Activated naive CD4-positive, alpha-beta T cell treated with anti-CD3 and anti-CD28 coated beads for 36 hours (primary cell): ENCODE measurements at regions of chr2 and their contacts with region 1.

Region 1: GRCh38 chr2:196101325-196101991 is 32.8 kb upstream of the DNAH7 start:
- DNase-seq: peak; percentile 71
- H3K4me3 Mint-ChIP-seq: no peak overlapping the region
- H3K27ac Mint-ChIP-seq: peak overlapping the region; percentile 44
- H3K4me1 Mint-ChIP-seq: peaks cover 44% of the 10 kb centered on the region
- H3K27me3 Mint-ChIP-seq: no peaks in the 10 kb centered on the region

Region 2: DNA sequence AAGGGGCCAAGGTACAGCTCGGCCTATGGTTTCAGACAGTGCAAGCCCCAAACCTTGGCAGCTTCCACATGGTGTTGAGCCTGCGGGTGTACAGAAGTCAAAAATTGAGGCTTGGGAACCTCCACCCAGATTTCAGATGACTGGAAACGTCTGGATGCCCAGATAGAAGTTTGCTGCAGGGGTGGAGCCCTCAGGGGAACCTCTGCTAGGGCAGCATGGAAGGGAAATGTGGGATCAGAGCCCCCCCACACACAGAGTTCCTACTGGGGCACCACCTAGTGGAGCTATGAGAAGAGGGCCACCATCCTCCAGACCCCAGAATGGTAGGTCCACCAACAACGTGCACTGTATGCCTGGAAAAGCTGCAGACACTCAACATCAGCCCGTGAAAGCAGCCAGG is 17.9 kb before region 1 on chr2:
- CTCF ChIA-PET with region 1: interaction called, 14 read pairs
- intact Hi-C with region 1: loop called (anchors 2 kb)
- DNase-seq: no peak
- H3K4me3 Mint-ChIP-seq: no peak overlapping the region
- H3K27ac Mint-ChIP-seq: no peak overlapping the region
- H3K4me1 Mint-ChIP-seq: peaks cover 27% of the 10 kb centered on the region
- H3K27me3 Mint-ChIP-seq: no peaks in the 10 kb centered on the region

Region 3: DNA sequence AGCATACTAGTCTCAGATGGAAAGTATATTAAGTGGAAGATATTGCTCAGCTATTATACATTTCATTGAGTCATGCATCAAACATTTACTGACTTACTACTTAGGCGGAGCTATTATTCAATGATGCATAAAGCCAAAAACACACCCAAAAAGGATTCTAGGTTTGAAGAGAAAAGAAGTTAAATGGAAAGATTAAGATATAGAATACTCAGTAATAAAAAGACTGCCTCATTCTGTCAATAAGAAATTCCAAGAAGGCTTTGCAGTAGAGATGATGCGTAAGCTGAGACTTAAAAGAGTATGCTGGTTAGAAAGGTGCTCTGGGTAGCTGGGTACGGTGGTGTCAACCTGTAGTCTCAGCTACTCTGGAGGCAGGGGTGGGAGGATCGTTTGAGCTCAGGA is 42.3 kb after region 1 on chr2:
- CTCF ChIA-PET with region 1: no interaction called
- intact Hi-C with region 1: loop called (anchors 1 kb)
- DNase-seq: no peak
- H3K4me3 Mint-ChIP-seq: peak overlapping the region; percentile 29
- H3K27ac Mint-ChIP-seq: peak overlapping the region; percentile 89
- H3K4me1 Mint-ChIP-seq: peaks cover 70% of the 10 kb centered on the region
- H3K27me3 Mint-ChIP-seq: no peaks in the 10 kb centered on the region

Region 4: GRCh38 chr2:196286821-196287220 is 185.4 kb after region 1 on chr2:
- CTCF ChIA-PET with region 1: no interaction called
- intact Hi-C with region 1: loop called (anchors 1 kb)
- DNase-seq: no peak
- H3K4me3 Mint-ChIP-seq: no peak overlapping the region
- H3K27ac Mint-ChIP-seq: no peak overlapping the region
- H3K4me1 Mint-ChIP-seq: peaks cover 73% of the 10 kb centered on the region
- H3K27me3 Mint-ChIP-seq: no peaks in the 10 kb centered on the region

Region 5: DNA sequence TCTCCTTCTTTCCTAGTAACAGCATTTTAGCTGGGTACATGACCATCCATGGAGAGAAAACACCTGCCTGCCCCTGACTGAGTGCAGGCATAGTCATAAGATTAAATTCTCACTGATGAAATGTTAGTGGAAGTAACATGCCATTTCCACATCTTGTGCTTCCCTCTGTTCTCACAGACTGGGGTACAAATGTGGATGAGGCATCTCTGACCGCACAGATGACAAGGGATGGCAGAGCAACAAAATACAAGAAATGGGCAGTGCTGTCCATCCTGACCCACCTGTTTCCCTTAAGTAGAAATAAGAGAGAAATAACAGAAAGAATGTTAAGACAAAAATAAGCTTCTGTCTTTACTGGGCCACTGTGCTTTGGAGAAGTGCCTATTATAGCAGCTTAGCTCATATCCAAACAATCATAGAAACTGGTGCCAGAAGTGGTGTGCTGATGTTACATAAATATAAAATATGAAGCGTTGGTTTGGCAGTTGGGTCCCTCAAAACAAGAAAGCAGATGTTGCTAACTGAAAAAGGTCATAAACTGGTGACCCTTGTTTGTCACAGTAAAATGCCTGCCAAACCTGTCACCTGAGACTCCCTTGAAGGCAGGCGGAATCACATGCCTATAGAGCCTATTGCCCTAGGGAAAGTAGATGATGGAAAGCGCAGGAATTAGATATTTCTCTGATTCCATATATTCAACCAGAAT is 465.7 kb after region 1 on chr2:
- CTCF ChIA-PET with region 1: no interaction called
- intact Hi-C with region 1: no loop called
- DNase-seq: no peak
- H3K4me3 Mint-ChIP-seq: no peak overlapping the region
- H3K27ac Mint-ChIP-seq: no peak overlapping the region
- H3K4me1 Mint-ChIP-seq: no peaks in the 10 kb centered on the region
- H3K27me3 Mint-ChIP-seq: peaks cover 21% of the 10 kb centered on the region